Activated CD8-positive, alpha-beta memory T cell treated with anti-CD3 and anti-CD28 coated beads, Interleukin-2, amount 10 ng/mL, durations not matched to agents 7 days and 5 days (primary cell): ENCODE measurements at regions of chr18 and their contacts with region 1.

Region 1: GRCh38 chr18:62522504-62523254 is at the start of gene ZCCHC2:
- DNase-seq: peak; percentile 98
- ATAC-seq: peak; percentile 84
- H3K4me3 Mint-ChIP-seq: peak within 1 kb of the TSS; percentile 93
- H3K27ac Mint-ChIP-seq: peak within 1 kb of the TSS; percentile 95
- H3K4me1 Mint-ChIP-seq: peaks cover 25% of the 10 kb centered on the region
- H3K27me3 Mint-ChIP-seq: no peaks in the 10 kb centered on the region
- total RNA-seq, gene ZCCHC2: 45.7 to 71.8 TPM

Region 2: DNA sequence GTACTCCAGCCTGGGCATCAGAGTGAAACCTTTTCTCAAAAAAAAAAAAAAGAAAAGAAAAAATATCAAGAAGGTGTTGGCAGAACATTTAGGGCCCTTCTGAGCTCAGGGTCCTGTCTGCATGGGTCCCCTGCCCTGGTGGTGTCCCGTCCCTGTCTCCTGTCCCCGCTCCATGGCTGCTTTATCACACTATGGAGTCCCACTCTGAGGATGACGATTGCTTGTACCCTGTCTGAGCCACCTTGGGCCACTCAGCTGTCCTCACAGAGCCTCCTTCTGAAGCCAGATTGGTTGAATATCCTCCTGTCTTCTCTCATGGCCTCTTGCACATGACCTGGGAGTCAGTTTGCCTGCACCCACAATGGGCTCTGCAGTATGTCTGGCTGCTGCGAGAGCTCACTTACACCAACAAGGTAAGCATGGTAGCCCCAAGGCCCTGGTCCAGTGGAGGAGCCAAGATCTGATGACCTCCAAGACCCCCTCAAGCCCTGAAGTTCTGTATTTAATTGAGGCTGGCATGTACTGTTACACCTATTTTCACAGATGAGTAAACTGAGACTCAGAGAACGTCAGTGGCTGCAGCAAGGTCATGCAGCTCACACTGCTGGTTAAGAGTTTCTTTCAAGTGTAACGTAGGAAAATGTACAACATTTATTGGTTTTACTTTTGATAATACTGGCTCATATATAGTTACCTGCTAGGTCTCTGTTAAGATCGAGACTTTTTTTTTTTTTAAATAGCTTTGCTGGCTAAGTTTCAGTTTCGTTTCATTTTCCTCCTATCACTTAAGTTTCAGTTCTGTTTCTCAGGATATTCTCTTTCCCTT is 16.8 kb before region 1 on chr18:
- CTCF ChIA-PET with region 1: interaction called, 27 read pairs
- DNase-seq: peak; percentile 70
- ATAC-seq: peak; percentile 87
- H3K4me3 Mint-ChIP-seq: peak overlapping the region; percentile 63
- H3K27ac Mint-ChIP-seq: peak overlapping the region; percentile 100
- H3K4me1 Mint-ChIP-seq: peaks cover 30% of the 10 kb centered on the region
- H3K27me3 Mint-ChIP-seq: no peaks in the 10 kb centered on the region